GM18951 (cell line): ENCODE measurements at regions of chr3 and their contacts with region 1.

Region 1: GRCh38 chr3:11060500-11061251 is 68.1 kb downstream of the SLC6A1 start:
- POLR2A ChIP-seq: no peak

Region 2: GRCh38 chr3:11271986-11272904 is 211.6 kb after region 1 on chr3 and contains the start of gene ATG7:
- in situ Hi-C with region 1: no loop called
- POLR2A ChIP-seq: peak; percentile 93

Region 3: GRCh38 chr3:11335056-11335608 is 274.5 kb after region 1 on chr3:
- in situ Hi-C with region 1: loop called (anchors 25 kb)
- POLR2A ChIP-seq: no peak